ENCODE measurements at regions of chr11 and their contacts with region 1.

Region 1: GRCh38 chr11:15101072-15101709 is 13.5 kb upstream of the INSC start:
- DNase-seq: peak; percentile 32 to 89 (median 76)

Region 2: GRCh38 chr11:14656536-14657457 is 444.4 kb before region 1 on chr11:
- intact Hi-C with region 1: no loop called
- DNase-seq: no peak

Region 3: DNA sequence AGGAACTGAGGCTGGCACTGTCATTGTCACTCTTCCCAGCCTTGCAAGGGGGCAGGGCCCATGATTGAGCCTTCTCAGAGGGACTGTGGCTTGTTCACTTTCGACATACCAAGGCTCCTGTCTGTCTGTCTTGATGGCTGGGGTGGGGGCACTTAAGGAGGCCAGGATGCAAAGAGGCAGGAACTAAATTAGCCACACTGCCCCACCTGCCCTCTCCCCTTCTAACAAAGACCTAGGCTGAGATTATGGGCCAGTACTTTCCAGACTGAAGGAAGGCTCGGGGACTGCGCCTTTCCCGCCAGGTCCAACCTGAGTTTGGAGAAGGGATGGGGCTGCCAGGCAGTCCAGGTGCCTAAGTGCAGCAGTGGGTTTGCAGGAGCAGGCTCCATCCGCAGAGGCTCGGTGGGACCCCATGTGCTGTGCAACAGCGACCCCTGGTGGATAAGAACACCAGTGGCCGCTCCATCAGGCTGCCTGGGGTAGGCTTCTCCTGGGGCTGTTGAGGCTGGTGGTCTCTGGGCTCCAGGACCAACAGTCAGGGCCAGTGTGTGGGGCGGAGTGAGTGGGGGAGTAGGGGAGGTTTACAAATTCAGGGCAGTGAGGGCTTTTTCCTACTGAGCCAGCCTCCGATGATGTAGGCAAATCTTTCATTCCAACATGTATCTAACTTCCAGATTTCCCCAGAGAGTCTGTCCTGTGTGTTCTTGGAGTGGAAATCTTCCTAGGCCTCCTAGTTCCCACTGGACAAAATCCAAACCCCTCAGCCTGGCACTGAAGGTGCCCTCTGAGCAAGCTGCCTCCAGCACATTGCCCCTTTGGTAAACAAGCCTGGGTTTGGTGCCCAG is 107.4 kb after region 1 on chr11:
- intact Hi-C with region 1: loop called (anchors 2 kb)
- DNase-seq: peak; percentile 72 to 94 (median 87)

Region 4: DNA sequence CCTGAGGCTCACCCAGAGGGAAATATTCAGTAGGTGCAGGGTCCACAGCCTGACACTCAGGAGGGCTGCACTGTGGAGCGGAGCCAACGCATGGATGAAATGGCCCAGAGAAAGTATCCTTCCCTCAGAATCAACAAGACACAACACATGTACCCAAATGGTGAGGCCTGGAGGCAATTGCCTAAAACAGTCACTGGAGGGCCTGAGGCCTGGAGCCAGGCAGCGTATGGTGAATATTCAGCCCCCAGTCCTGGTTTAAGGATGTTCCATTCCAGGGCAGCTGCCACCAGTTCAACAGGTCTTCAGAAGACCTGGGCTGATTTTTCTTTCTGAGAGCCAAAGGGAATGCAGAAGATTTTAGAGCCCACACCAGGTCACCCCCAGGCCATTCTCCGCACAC is 278.3 kb after region 1 on chr11:
- intact Hi-C with region 1: no loop called
- DNase-seq: no peak

Region 5: GRCh38 chr11:15707971-15708370 is 606.8 kb after region 1 on chr11:
- intact Hi-C with region 1: no loop called
- DNase-seq: peak in 22 of 42 donors; percentile 4 to 56 (median 24)